ENCODE measurements at regions of chr19 and their contacts with region 1.

Region 1: GRCh38 chr19:9934132-9934950 is 2.0 kb downstream of the OLFM2 start:
- DNase-seq: peak; percentile 49 to 85 (median 61)
- ATAC-seq: peak; percentile 35 to 88 (median 70)
- H3K4me3 ChIP-seq: no peak overlapping the region
- H3K27ac ChIP-seq: peak overlapping the region in 1 of 12 donors; percentile 7
- H3K4me1 ChIP-seq: peaks cover 0 to 29% (median 12%) of the 10 kb centered on the region in 12 donors
- H3K27me3 ChIP-seq: peaks cover 7 to 66% (median 40%) of the 10 kb centered on the region in 9 donors
- CTCF ChIP-seq: peak; percentile 65 to 84 (median 79)
- POLR2A ChIP-seq: no peak

Region 2: GRCh38 chr19:9406798-9407352 is 527.5 kb before region 1 on chr19:
- intact Hi-C with region 1: no loop called
- DNase-seq: peak; percentile 83 to 94 (median 88)
- ATAC-seq: peak; percentile 92 to 99 (median 98)
- H3K4me3 ChIP-seq: peak overlapping the region; percentile 15 to 80 (median 66)
- H3K27ac ChIP-seq: peak overlapping the region in 10 of 12 donors; percentile 14 to 76 (median 47)
- H3K4me1 ChIP-seq: peaks cover 0 to 28% (median 0%) of the 10 kb centered on the region in 12 donors
- H3K27me3 ChIP-seq: no peaks in the 10 kb centered on the region
- CTCF ChIP-seq: no peak
- POLR2A ChIP-seq: no peak

Region 3: GRCh38 chr19:9847087-9847671 is 87.2 kb before region 1 on chr19:
- intact Hi-C with region 1: no loop called
- DNase-seq: peak in 2 of 5 donors; percentile 50 to 51
- ATAC-seq: peak in 3 of 4 donors; percentile 48 to 64 (median 48)
- H3K4me3 ChIP-seq: no peak overlapping the region
- H3K27ac ChIP-seq: peak overlapping the region in 1 of 12 donors; percentile 36
- H3K4me1 ChIP-seq: peaks cover 0 to 20% (median 0%) of the 10 kb centered on the region in 12 donors
- H3K27me3 ChIP-seq: no peaks in the 10 kb centered on the region
- CTCF ChIP-seq: peak in 7 of 12 donors; percentile 8 to 40 (median 32)
- POLR2A ChIP-seq: no peak

Region 4: GRCh38 chr19:9995084-9995483 is 60.7 kb after region 1 on chr19:
- intact Hi-C with region 1: no loop called
- DNase-seq: peak in 1 of 5 donors; percentile 4
- ATAC-seq: no peak
- H3K4me3 ChIP-seq: no peak overlapping the region
- H3K27ac ChIP-seq: no peak overlapping the region
- H3K4me1 ChIP-seq: peaks cover 0 to 3% (median 0%) of the 10 kb centered on the region in 12 donors
- H3K27me3 ChIP-seq: peaks cover 0 to 16% (median 0%) of the 10 kb centered on the region in 9 donors
- CTCF ChIP-seq: no peak
- POLR2A ChIP-seq: no peak

Region 5: DNA sequence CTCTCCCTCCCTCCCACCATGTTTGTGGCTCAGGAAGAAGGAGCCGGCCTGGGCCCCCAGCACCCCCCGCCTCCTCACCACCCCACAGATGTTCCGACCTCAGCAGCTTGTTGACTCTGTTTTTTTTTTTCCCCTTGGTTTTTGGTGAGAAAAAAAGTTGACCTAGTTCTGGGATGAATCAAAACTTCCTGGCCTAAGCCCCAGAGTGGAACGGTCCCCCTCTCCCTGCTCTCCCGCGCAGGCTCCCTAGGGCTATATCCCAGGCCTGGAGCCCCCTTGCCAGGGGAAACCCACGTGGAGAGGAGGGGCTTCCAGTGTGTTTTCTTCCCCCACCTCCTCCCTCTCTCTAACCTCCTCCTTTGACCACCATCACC is 72.0 kb after region 1 on chr19:
- intact Hi-C with region 1: loop called in 2 of 10 experiments (anchors 5 kb)
- DNase-seq: peak; percentile 68 to 78 (median 72)
- ATAC-seq: peak; percentile 29 to 58 (median 48)
- H3K4me3 ChIP-seq: peak overlapping the region in 7 of 12 donors; percentile 3 to 30 (median 14)
- H3K27ac ChIP-seq: peak overlapping the region; percentile 55 to 90 (median 78)
- H3K4me1 ChIP-seq: peaks cover 0 to 55% (median 9%) of the 10 kb centered on the region in 12 donors
- H3K27me3 ChIP-seq: peaks cover 6 to 59% (median 27%) of the 10 kb centered on the region in 9 donors
- CTCF ChIP-seq: no peak
- POLR2A ChIP-seq: no peak

Region 6: GRCh38 chr19:10095948-10096621 is 161.7 kb after region 1 on chr19:
- intact Hi-C with region 1: loop called in 1 of 10 experiments (anchors 5 kb)
- DNase-seq: peak; percentile 87 to 96 (median 90)
- ATAC-seq: peak; percentile 55 to 94 (median 88)
- H3K4me3 ChIP-seq: peak overlapping the region in 11 of 12 donors; percentile 28 to 68 (median 57)
- H3K27ac ChIP-seq: peak overlapping the region in 11 of 12 donors; percentile 47 to 89 (median 57)
- H3K4me1 ChIP-seq: peaks cover 0 to 19% (median 9%) of the 10 kb centered on the region in 12 donors
- H3K27me3 ChIP-seq: no peaks in the 10 kb centered on the region
- CTCF ChIP-seq: no peak
- POLR2A ChIP-seq: peak in 1 of 2 donors; percentile 68

Region 7: DNA sequence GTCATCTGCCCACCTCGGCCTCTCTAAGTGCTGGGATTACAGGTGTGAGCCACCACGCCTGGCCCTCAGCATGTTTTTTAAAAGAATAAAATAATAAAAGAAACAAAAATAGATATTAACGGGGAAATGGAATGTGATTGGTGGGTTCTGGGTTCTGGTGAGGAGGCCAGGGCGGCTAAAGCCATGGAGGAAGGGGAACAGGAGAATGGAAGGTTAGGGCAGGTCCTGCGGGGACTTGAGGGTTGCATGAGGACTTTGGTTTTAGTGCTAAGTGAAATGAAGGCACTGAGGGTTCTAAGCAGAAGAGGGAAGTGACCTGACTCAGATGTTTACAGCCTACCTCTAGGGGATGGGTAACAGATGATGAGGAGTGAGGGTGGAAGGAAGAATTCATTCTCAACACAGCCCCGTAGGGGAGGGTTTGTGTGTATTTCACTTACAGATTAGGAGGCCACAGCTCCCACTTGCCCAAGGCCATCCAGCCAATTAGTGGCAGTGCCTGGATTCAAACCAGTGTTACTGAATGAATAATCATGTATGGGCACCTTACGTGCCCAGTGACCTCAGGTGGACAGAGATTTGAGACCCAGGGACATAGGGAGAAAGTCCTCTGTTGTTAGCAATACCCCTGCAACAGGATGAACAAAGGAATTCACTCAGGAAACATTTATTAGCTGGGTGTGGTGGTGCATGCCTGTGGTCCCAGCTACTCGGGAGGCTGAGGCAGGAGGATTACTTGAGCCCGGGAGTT is 311.0 kb after region 1 on chr19:
- intact Hi-C with region 1: loop called (anchors 1 to 10 kb)
- DNase-seq: no peak
- ATAC-seq: no peak
- H3K4me3 ChIP-seq: no peak overlapping the region
- H3K27ac ChIP-seq: no peak overlapping the region
- H3K4me1 ChIP-seq: peaks cover 0 to 7% (median 0%) of the 10 kb centered on the region in 12 donors
- H3K27me3 ChIP-seq: no peaks in the 10 kb centered on the region
- CTCF ChIP-seq: no peak
- POLR2A ChIP-seq: no peak

Region 8: GRCh38 chr19:10380313-10381102 is 446.2 kb after region 1 on chr19 and contains the start of gene TYK2:
- intact Hi-C with region 1: loop called in 5 of 10 experiments (anchors 5 to 10 kb)
- DNase-seq: peak; percentile 97 to 98 (median 98)
- ATAC-seq: peak; percentile 99
- H3K4me3 ChIP-seq: peak within 1 kb of the TSS; percentile 71 to 99 (median 90)
- H3K27ac ChIP-seq: peak within 1 kb of the TSS; percentile 41 to 90 (median 82)
- H3K4me1 ChIP-seq: peaks cover 0 to 37% (median 12%) of the 10 kb centered on the region in 12 donors
- H3K27me3 ChIP-seq: no peaks in the 10 kb centered on the region
- CTCF ChIP-seq: no peak
- POLR2A ChIP-seq: peak in 1 of 2 donors; percentile 66
- total RNA-seq, gene TYK2: 37.7 to 86.3 (median 55.3) TPM

Measured in heart left ventricle (tissue), 16 donors.